Gastrocnemius medialis (tissue), 4 donors: ENCODE measurements at regions of chr17 and their contacts with region 1.

Region 1: GRCh38 chr17:81294856-81295680 is at the start of gene SLC38A10:
- DNase-seq: peak; percentile 81 to 84
- ATAC-seq: peak; percentile 85 to 89
- H3K4me3 ChIP-seq: peak within 1 kb of the TSS; percentile 69 to 98 (median 92)
- H3K27ac ChIP-seq: peak within 1 kb of the TSS; percentile 91 to 99 (median 96)
- H3K4me1 ChIP-seq: peaks cover 25 to 27% of the 10 kb centered on the region in 2 donors
- H3K27me3 ChIP-seq: no peaks in the 10 kb centered on the region
- CTCF ChIP-seq: peak in 2 of 5 experiments; percentile 7 to 29
- POLR2A ChIP-seq: peak; percentile 97 to 99
- total RNA-seq, gene SLC38A10: 24.5 to 56.5 (median 28.8) TPM

Region 2: DNA sequence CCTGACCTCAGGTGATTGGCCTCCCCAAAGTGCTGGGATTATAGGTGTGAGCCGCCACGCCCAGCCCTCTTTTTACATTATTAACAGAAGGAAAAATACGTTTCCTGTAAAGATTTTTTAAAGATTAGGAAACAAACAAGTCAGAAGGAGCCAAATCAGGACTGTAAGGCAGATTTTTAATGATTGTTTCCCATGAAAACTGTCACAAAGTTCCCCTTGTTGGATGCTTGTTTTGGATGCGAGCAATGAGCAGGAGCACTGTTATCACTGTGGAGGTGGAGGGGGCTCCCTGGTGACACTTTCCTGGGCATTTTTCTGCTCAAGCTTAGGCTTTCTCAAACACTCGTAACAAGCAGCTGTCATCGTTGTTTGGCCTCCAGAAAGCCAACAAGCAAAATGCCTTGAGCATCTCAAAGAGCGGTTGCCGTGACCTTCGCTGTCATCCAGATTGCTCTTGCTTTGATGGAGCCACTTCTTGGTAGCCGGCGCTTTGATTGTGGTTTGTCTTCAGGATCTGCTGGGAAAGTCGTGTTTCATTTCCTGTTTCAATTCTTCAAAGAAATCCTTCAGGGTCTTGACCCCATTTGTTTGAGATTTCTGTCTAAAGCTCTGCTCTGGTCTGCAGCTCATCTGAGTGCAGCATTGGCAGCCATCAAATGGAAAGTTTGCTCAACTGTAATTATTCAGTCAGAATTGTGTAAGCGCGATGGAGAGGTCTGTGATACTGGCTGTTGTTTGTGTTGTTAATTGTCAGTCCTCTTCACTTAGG is 621.7 kb before region 1 on chr17:
- in situ Hi-C with region 1: no loop called
- intact Hi-C with region 1: no loop called
- DNase-seq: no peak
- ATAC-seq: no peak
- H3K4me3 ChIP-seq: no peak overlapping the region
- H3K27ac ChIP-seq: no peak overlapping the region
- H3K4me1 ChIP-seq: peaks cover 0 to 7% of the 10 kb centered on the region in 2 donors
- H3K27me3 ChIP-seq: no peaks in the 10 kb centered on the region
- CTCF ChIP-seq: no peak
- POLR2A ChIP-seq: no peak

Region 3: GRCh38 chr17:81328978-81329919 is 34.2 kb after region 1 on chr17:
- in situ Hi-C with region 1: no loop called
- intact Hi-C with region 1: loop called (anchors 2 kb)
- DNase-seq: peak; percentile 97 to 99
- ATAC-seq: peak; percentile 37 to 44
- H3K4me3 ChIP-seq: peak overlapping the region; percentile 2 to 43 (median 34)
- H3K27ac ChIP-seq: peak overlapping the region; percentile 90 to 98 (median 96)
- H3K4me1 ChIP-seq: peaks cover 54 to 62% of the 10 kb centered on the region in 2 donors
- H3K27me3 ChIP-seq: no peaks in the 10 kb centered on the region
- CTCF ChIP-seq: no peak
- POLR2A ChIP-seq: peak; percentile 63 to 76

Region 4: GRCh38 chr17:81387100-81388090 is 92.3 kb after region 1 on chr17:
- in situ Hi-C with region 1: loop called in 1 of 4 experiments (anchors 10 kb)
- intact Hi-C with region 1: loop called (anchors 2 kb)
- DNase-seq: peak in 1 of 2 donors; percentile 59
- ATAC-seq: peak; percentile 43 to 53
- H3K4me3 ChIP-seq: peak overlapping the region; percentile 80 to 96 (median 85)
- H3K27ac ChIP-seq: peak overlapping the region; percentile 93 to 99 (median 98)
- H3K4me1 ChIP-seq: peaks cover 35 to 45% of the 10 kb centered on the region in 2 donors
- H3K27me3 ChIP-seq: no peaks in the 10 kb centered on the region
- CTCF ChIP-seq: peak in 1 of 5 experiments; percentile 17
- POLR2A ChIP-seq: peak; percentile 35 to 72

Region 5: GRCh38 chr17:81428948-81429774 is 134.1 kb after region 1 on chr17:
- in situ Hi-C with region 1: no loop called
- intact Hi-C with region 1: loop called (anchors 2 kb)
- DNase-seq: peak in 1 of 2 donors; percentile 59
- ATAC-seq: peak; percentile 19 to 21
- H3K4me3 ChIP-seq: peak overlapping the region; percentile 0 to 30 (median 14)
- H3K27ac ChIP-seq: peak overlapping the region; percentile 75 to 94 (median 85)
- H3K4me1 ChIP-seq: peaks cover 39 to 44% of the 10 kb centered on the region in 2 donors
- H3K27me3 ChIP-seq: no peaks in the 10 kb centered on the region
- CTCF ChIP-seq: no peak
- POLR2A ChIP-seq: no peak